ENCODE measurements at regions of chr11 and their contacts with region 1.

Region 1: GRCh38 chr11:6389921-6390724 is at the start of gene SMPD1:
- ATAC-seq: peak; percentile 85 to 94 (median 90)
- H3K4me3 ChIP-seq: peak within 1 kb of the TSS; percentile 66 to 87 (median 69)
- H3K27ac ChIP-seq: peak within 1 kb of the TSS; percentile 57 to 74
- H3K4me1 ChIP-seq: peaks cover 17 to 18% of the 10 kb centered on the region in 2 donors
- total RNA-seq, gene SMPD1: 14.4 to 75.1 (median 21.0) TPM

Region 2: DNA sequence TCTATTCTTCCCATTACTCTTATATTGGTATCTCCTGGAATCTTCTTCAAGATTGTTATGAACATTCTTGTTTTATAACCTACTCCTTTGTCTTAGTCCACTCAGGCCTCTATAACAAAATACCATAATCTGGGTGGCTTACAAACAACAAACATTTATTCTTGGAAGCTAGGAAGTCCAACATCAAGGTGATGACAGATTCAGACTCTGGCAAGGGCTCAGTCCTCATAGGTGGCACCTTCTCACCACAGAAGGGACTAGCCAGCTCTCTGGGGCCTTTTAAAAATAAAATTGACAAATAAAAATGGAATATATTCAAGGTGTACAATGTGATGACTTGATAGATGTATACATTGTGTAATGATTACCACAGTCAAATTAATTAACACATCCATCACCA is 126.7 kb after region 1 on chr11:
- in situ Hi-C with region 1: no loop called
- ATAC-seq: no peak
- H3K4me3 ChIP-seq: no peak overlapping the region
- H3K27ac ChIP-seq: no peak overlapping the region
- H3K4me1 ChIP-seq: no peaks in the 10 kb centered on the region

Region 3: GRCh38 chr11:6612213-6613041 is 222.3 kb after region 1 on chr11 and contains the start of gene TAF10:
- in situ Hi-C with region 1: loop called in 2 of 9 experiments (anchors 25 kb)
- ATAC-seq: peak; percentile 84 to 92 (median 88)
- H3K4me3 ChIP-seq: peak within 1 kb of the TSS; percentile 67 to 99 (median 75)
- H3K27ac ChIP-seq: peak within 1 kb of the TSS; percentile 97 to 98
- H3K4me1 ChIP-seq: peaks cover 11 to 13% of the 10 kb centered on the region in 2 donors
- total RNA-seq, gene TAF10: 64.9 to 163 (median 105) TPM

Measured in motor neuron (in vitro differentiated cells).